Dendritic cell treated with granulocyte-macrophage colony-stimulating factor and Interleukin-4, amounts not matched to agents 40 ng/mL and 50 ng/mL, for 4 days (primary cell): ENCODE measurements at regions of chr20 and their contacts with region 1.

Region 1: DNA sequence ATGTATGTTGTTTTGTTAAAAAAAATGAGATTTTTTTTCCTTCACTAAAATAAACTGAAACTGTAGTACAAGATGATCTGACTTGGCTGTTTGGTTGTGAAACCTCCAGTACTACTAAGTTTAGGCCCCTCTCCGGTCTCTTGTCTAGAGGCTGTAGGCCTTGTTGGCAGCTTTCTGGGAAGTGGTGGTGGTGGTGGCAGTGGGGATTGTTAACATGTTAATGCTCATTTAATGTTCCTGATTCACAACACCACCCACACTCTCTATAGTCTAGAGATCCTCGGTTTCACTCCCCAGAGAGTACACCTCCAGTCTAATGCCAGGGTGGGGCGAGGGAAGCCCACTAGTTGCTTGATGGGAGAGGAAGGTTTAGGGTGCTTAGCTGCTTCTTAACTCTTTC is 24.1 kb downstream of the STK4 start:
- H3K4me3 Mint-ChIP-seq: peak overlapping the region; percentile 58
- H3K27ac Mint-ChIP-seq: peak overlapping the region; percentile 87
- H3K4me1 Mint-ChIP-seq: peaks cover 57% of the 10 kb centered on the region
- H3K27me3 Mint-ChIP-seq: no peaks in the 10 kb centered on the region

Region 2: GRCh38 chr20:44909872-44910689 is 80.3 kb before region 1 on chr20 and contains the start of gene PABPC1L:
- intact Hi-C with region 1: loop called (anchors 10 kb)
- H3K4me3 Mint-ChIP-seq: peak within 1 kb of the TSS; percentile 89
- H3K27ac Mint-ChIP-seq: peak within 1 kb of the TSS; percentile 50
- H3K4me1 Mint-ChIP-seq: peaks cover 30% of the 10 kb centered on the region
- H3K27me3 Mint-ChIP-seq: no peaks in the 10 kb centered on the region

Region 3: DNA sequence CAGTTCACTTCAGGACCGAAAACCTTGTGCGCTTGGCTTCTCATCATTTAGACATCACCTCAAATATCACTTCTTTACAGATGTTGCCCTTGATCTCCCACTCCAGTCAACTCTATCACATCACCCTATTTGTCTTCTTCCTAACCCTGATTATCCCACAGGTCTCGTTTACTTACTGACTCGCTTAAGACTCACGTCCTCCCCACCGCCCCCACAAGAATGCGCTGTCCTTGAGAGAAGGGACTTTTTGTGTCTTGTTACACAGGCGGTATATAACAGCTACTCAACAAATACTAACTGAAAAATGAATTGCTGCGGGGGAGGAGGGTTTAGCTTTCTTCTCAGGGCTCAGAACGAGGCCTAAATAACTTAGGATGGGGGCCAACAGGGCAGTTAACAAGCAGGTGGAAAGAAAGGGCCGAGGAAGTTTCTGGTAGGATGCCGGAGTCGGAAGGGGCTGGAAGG is 30.8 kb before region 1 on chr20:
- intact Hi-C with region 1: loop called (anchors 5 kb)
- H3K4me3 Mint-ChIP-seq: peak overlapping the region; percentile 86
- H3K27ac Mint-ChIP-seq: peak overlapping the region; percentile 76
- H3K4me1 Mint-ChIP-seq: peaks cover 52% of the 10 kb centered on the region
- H3K27me3 Mint-ChIP-seq: no peaks in the 10 kb centered on the region